H1 (cell line): ENCODE measurements at regions of chr6 and their contacts with region 1.

Region 1: GRCh38 chr6:110389689-110390382 is 25.5 kb downstream of the DDO start:
- DNase-seq: no peak
- H3K4me3 ChIP-seq: no peak overlapping the region
- H3K27ac ChIP-seq: no peak overlapping the region
- H3K4me1 ChIP-seq: peaks cover 0 to 1% (median 0%) of the 10 kb centered on the region in 4 experiments; a peak in 1 of 7 replicates
- H3K27me3 ChIP-seq: no peaks in the 10 kb centered on the region
- CTCF ChIP-seq: no peak
- EP300 ChIP-seq: no peak
- POLR2A ChIP-seq: no peak
- RAD21 ChIP-seq: no peak

Region 2: GRCh38 chr6:110053395-110054240 is 336.2 kb before region 1 on chr6:
- CTCF ChIA-PET with region 1: interaction called, 37 read pairs
- POLR2A ChIA-PET with region 1: no interaction called
- DNase-seq: no peak
- H3K4me3 ChIP-seq: no peak overlapping the region
- H3K27ac ChIP-seq: no peak overlapping the region
- H3K4me1 ChIP-seq: peaks cover 0 to 3% (median 0%) of the 10 kb centered on the region in 4 experiments; a peak in 1 of 7 replicates
- H3K27me3 ChIP-seq: no peaks in the 10 kb centered on the region
- CTCF ChIP-seq: peak in 2 of 3 experiments; percentile 71 to 78; a peak in 3 of 4 replicates
- EP300 ChIP-seq: no peak
- POLR2A ChIP-seq: no peak
- RAD21 ChIP-seq: peak; percentile 90 to 91

Region 3: GRCh38 chr6:110207652-110208051 is 182.2 kb before region 1 on chr6:
- CTCF ChIA-PET with region 1: interaction called, 12 read pairs
- POLR2A ChIA-PET with region 1: no interaction called
- DNase-seq: no peak
- H3K4me3 ChIP-seq: no peak overlapping the region
- H3K27ac ChIP-seq: no peak overlapping the region
- H3K4me1 ChIP-seq: no peaks in the 10 kb centered on the region
- H3K27me3 ChIP-seq: peaks cover 0 to 1% (median 0%) of the 10 kb centered on the region in 4 experiments; a peak in 1 of 7 replicates
- CTCF ChIP-seq: no peak
- EP300 ChIP-seq: no peak
- POLR2A ChIP-seq: no peak
- RAD21 ChIP-seq: no peak

Region 4: GRCh38 chr6:110250838-110251237 is 139.0 kb before region 1 on chr6:
- CTCF ChIA-PET with region 1: interaction called, 18 read pairs
- POLR2A ChIA-PET with region 1: no interaction called
- DNase-seq: no peak
- H3K4me3 ChIP-seq: no peak overlapping the region
- H3K27ac ChIP-seq: no peak overlapping the region
- H3K4me1 ChIP-seq: peaks cover 0 to 2% (median 0%) of the 10 kb centered on the region in 4 experiments; a peak in 1 of 7 replicates
- H3K27me3 ChIP-seq: no peaks in the 10 kb centered on the region
- CTCF ChIP-seq: peak in 2 of 3 experiments; percentile 20 to 38; a peak in 2 of 4 replicates
- EP300 ChIP-seq: no peak
- POLR2A ChIP-seq: no peak
- RAD21 ChIP-seq: peak; percentile 46 to 57

Region 5: DNA sequence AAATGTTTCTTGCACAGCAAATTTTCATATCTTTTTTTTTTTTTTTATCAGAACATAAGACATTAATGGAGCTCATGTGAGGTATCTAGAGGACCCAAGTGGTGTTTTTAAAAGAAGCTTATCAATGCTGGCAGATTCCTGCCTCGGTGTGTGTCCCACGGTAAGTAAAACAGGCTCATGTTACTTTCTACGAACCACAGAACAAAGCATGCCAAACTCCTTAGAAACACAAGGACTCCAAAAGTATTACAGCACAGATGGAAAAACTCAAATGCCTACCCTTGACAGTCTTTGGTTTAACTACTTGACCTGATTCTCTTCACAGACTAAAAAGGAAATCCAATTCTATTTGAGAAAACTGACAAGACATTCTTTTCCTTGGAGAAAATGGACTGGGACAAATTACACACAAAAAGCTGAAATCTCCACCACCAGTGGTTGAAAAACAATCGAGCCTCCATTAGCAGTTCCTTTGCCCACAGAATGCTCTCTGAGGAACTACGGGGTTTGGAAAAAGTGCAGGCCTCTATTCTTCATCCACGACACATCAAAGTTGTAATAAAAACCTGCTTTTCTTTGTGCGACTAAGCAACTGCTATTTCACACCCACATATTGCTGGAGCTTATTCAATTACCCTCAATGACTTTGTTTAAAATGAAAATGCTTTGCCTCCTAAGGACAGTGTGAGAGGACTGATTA is 37.1 kb before region 1 on chr6:
- CTCF ChIA-PET with region 1: interaction called, 10 read pairs
- POLR2A ChIA-PET with region 1: no interaction called
- DNase-seq: no peak
- H3K4me3 ChIP-seq: no peak overlapping the region
- H3K27ac ChIP-seq: no peak overlapping the region
- H3K4me1 ChIP-seq: peaks cover 13 to 26% (median 20%) of the 10 kb centered on the region in 4 experiments
- H3K27me3 ChIP-seq: peaks cover 6 to 15% (median 14%) of the 10 kb centered on the region in 4 experiments
- CTCF ChIP-seq: no peak
- EP300 ChIP-seq: no peak
- POLR2A ChIP-seq: no peak
- RAD21 ChIP-seq: no peak

Region 6: DNA sequence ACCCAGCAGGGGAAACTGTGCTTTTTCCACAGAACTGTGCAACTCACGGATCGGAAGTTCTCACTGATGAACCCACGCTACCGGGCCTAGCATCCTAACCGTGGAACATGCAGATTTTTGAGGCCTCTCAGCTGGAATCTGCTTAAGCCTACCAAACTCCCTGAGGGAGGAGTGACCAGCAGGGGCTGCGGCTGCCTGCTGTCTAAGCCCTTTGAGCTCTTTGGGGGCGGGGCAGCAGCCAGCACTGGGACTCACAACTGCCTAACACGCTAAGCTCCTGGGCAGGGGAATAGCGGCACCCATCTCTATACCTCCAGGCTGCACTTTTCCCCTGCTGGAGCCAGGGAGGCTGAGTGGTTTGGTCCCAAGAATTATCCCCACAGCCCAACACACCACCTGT is 11.3 kb before region 1 on chr6:
- CTCF ChIA-PET with region 1: interaction called, 16 read pairs
- POLR2A ChIA-PET with region 1: no interaction called
- DNase-seq: peak; percentile 27 to 50
- H3K4me3 ChIP-seq: no peak overlapping the region
- H3K27ac ChIP-seq: no peak overlapping the region
- H3K4me1 ChIP-seq: peaks cover 0 to 6% (median 3%) of the 10 kb centered on the region in 4 experiments; a peak in 6 of 7 replicates
- H3K27me3 ChIP-seq: no peaks in the 10 kb centered on the region
- CTCF ChIP-seq: peak in 1 of 3 experiments; percentile 9; a peak in 1 of 4 replicates
- EP300 ChIP-seq: no peak
- POLR2A ChIP-seq: no peak
- RAD21 ChIP-seq: 0 out of 4 replicates have a peak, but pooled peaks of 1 of the 2 experiments have one; percentile 14